ENCODE measurements at regions of chr17 and their contacts with region 1.

Region 1: DNA sequence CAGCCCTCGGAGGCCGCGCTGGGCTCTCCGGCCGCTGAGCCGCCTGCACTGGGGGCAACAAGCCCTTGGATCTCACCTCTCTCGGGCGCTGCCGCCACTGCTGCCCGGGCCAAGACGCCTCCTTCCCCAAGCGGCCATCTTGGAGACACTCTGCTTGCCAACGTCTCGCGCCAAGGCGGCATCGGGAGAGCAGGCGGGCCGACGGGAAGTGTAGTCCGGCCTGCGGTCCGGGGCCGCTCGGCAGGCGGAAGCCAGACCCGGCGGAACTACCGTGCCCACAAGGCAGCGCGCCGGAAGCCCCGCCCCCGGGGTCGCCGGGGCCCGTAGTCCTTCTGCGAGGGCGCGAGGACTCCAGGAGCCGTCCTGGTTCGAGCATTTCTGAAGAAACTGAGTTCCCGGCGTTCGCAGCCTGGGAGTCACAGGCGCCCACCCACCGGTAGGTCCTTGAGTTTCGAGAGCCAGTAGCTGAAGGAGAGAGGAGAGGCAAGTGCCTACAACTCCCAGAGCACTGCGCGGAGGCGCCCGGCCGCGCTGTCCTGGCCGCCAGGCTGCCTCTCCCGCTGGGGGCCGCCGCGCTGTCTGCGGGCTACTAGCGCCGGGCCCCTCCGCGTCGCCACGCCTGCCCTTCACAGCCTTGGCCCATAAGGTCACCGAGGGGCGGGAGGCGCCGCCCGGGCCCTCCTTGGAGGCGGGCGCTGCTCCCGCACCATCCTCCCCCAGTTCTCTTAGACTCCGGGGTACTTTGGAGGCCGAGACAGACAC is at the start of gene TMEM11:
- DNase-seq: peak; percentile 98
- total RNA-seq, gene TMEM11: 32.0 TPM

Region 2: DNA sequence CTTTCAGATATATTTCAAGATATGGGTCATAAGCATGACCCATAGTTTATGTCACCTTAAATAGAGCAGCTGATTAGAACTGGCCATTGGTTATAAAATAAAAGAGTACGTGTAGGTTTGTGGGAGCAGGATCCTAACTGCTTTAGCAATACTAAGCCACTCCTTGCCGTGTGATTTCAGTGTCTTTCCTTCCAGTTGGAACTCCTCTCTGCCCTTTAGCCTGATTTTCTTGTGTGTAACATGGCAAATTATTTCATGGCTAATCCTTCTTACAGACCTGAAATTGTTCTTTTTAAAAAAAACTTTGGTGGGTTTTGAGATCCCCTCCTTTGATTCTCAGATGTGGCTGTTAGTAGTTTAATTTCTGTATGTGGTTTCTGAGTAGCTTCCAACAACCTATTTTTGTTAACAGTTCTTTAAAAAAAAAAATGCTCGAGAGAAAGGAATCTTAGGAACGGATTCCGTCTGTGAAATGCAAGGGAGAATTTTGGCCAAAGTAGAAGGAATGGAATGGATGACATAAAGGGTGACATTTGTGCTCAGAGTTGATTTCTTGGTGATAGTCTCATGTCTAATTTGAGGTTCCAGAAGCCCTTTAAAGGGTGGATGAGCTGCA is 47.5 kb before region 1 on chr17:
- intact Hi-C with region 1: loop called (anchors 5 kb)
- DNase-seq: no peak

Region 3: GRCh38 chr17:21275579-21276263 is 61.5 kb after region 1 on chr17:
- intact Hi-C with region 1: loop called (anchors 5 kb)
- DNase-seq: peak; percentile 99

Measured in cardiac septum (tissue), 1 donor.